CD8-positive, alpha-beta T cell (primary cell): ENCODE measurements at regions of chr11 and their contacts with region 1.

Region 1: GRCh38 chr11:66677599-66678375 is at the start of gene RBM4B:
- DNase-seq: peak; percentile 92 to 99 (median 96)
- ATAC-seq: peak; percentile 84
- H3K4me3 ChIP-seq: peak within 1 kb of the TSS; percentile 79 to 83
- H3K4me3 Mint-ChIP-seq: peak within 1 kb of the TSS; percentile 88
- H3K27ac ChIP-seq: peak within 1 kb of the TSS; percentile 92 to 97
- H3K27ac Mint-ChIP-seq: peak within 1 kb of the TSS; percentile 99
- H3K4me1 ChIP-seq: peaks cover 24% of the 10 kb centered on the region
- H3K4me1 Mint-ChIP-seq: peaks cover 36% of the 10 kb centered on the region
- H3K27me3 ChIP-seq: no peaks in the 10 kb centered on the region
- H3K27me3 Mint-ChIP-seq: no peaks in the 10 kb centered on the region
- CTCF ChIP-seq: no peak
- total RNA-seq, gene RBM4B: 5.4 to 5.6 TPM

Region 2: DNA sequence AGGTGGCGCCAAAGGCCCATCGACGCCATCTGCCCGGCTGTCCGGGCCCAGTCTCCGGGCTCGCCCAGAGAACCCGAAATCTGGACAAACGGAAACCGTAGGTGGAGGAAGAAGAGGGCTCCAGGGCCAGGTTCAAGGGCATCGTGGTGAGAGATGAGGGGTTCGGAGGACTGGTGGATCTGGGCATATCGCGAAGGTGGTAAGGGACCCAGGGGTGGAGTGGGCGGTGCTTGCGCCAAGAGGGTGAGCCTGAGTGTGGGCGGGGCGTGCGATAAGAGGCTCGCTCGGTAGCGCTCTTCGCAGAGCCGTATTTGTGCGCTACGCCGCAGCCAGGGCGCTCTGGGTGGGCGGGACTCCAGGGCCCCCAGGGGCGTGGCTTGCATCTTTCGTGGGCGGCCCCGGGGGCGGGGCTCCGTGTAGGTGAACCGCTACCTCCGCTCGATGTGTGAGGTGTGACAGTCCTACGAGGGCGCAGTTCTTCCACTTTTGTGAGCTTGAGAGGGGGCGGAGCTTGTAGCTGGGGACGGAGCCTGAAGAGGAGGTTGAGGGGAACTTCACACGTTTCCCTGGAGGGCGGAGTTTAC is 365.7 kb before region 1 on chr11:
- CTCF ChIA-PET with region 1: interaction called, 3 read pairs
- POLR2A ChIA-PET with region 1: interaction called, 3 read pairs
- intact Hi-C with region 1: loop called in 1 of 2 experiments (anchors 2 kb)
- DNase-seq: peak; percentile 94 to 100 (median 99)
- ATAC-seq: peak; percentile 71
- H3K4me3 ChIP-seq: peak overlapping the region; percentile 51 to 79
- H3K4me3 Mint-ChIP-seq: peak overlapping the region; percentile 93
- H3K27ac ChIP-seq: peak overlapping the region; percentile 76 to 98
- H3K27ac Mint-ChIP-seq: peak overlapping the region; percentile 99
- H3K4me1 ChIP-seq: peaks cover 6% of the 10 kb centered on the region
- H3K4me1 Mint-ChIP-seq: peaks cover 20% of the 10 kb centered on the region
- H3K27me3 ChIP-seq: no peaks in the 10 kb centered on the region
- H3K27me3 Mint-ChIP-seq: no peaks in the 10 kb centered on the region
- CTCF ChIP-seq: peak; percentile 98

Region 3: GRCh38 chr11:66438504-66439466 is 239.0 kb before region 1 on chr11 and contains the start of gene MRPL11:
- CTCF ChIA-PET with region 1: interaction called, 12 read pairs
- POLR2A ChIA-PET with region 1: interaction called, 9 read pairs
- intact Hi-C with region 1: loop called in 1 of 2 experiments (anchors 1 kb)
- DNase-seq: peak; percentile 79 to 96 (median 90)
- ATAC-seq: peak; percentile 99
- H3K4me3 ChIP-seq: peak within 1 kb of the TSS; percentile 72 to 78
- H3K4me3 Mint-ChIP-seq: peak within 1 kb of the TSS; percentile 91
- H3K27ac ChIP-seq: peak within 1 kb of the TSS; percentile 66 to 85
- H3K27ac Mint-ChIP-seq: peak within 1 kb of the TSS; percentile 98
- H3K4me1 ChIP-seq: peaks cover 7% of the 10 kb centered on the region
- H3K4me1 Mint-ChIP-seq: peaks cover 10% of the 10 kb centered on the region
- H3K27me3 ChIP-seq: no peaks in the 10 kb centered on the region
- H3K27me3 Mint-ChIP-seq: peaks cover 2% of the 10 kb centered on the region
- CTCF ChIP-seq: peak; percentile 64
- total RNA-seq, gene MRPL11: 19.8 to 20.6 TPM

Region 4: DNA sequence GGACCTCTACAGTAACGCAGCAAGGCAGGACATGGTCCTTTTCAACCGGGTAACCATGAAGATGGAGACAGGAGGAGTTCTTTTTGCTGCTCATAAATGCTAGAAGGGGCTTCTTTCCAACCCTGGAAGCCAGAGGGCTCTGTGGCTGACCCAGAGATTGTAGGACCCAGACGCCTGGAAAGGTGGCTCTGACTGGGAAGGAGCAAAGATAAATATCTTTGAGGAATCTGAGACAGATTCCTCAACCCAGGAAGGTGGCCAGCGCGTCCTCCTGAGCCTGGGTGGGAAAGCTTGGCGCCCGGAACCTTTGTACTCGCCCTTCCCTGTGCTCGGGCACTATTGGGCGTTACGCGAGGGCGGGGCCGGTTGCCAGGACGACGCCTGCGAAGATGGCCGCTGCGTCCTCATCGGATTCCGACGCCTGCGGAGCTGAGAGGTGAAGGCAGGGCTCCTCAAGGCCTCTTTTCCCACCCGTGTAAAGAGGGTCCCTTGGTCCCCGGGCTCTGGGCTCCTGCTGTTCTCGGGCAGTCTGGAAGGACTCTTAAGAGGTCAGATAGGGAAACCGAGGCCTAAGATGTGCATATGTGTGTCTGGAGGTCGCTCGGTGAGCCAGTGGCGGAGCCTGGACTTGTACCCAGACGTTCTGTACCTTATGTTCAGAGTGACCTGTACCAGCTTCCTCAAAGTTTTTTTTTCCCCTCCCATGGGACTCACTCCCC is 167.4 kb before region 1 on chr11 and contains the start of gene BBS1:
- CTCF ChIA-PET with region 1: interaction called, 9 read pairs
- POLR2A ChIA-PET with region 1: no interaction called
- intact Hi-C with region 1: loop called in 1 of 2 experiments (anchors 1 kb)
- DNase-seq: peak; percentile 62 to 91 (median 84)
- ATAC-seq: peak; percentile 98
- H3K4me3 ChIP-seq: peak within 1 kb of the TSS; percentile 68 to 81
- H3K4me3 Mint-ChIP-seq: peak within 1 kb of the TSS; percentile 88
- H3K27ac ChIP-seq: peak within 1 kb of the TSS; percentile 57 to 62
- H3K27ac Mint-ChIP-seq: peak within 1 kb of the TSS; percentile 22
- H3K4me1 ChIP-seq: peaks cover 15% of the 10 kb centered on the region
- H3K4me1 Mint-ChIP-seq: peaks cover 13% of the 10 kb centered on the region
- H3K27me3 ChIP-seq: no peaks in the 10 kb centered on the region
- H3K27me3 Mint-ChIP-seq: no peaks in the 10 kb centered on the region
- CTCF ChIP-seq: no peak
- total RNA-seq, gene BBS1: 10.8 to 13.5 TPM

Region 5: DNA sequence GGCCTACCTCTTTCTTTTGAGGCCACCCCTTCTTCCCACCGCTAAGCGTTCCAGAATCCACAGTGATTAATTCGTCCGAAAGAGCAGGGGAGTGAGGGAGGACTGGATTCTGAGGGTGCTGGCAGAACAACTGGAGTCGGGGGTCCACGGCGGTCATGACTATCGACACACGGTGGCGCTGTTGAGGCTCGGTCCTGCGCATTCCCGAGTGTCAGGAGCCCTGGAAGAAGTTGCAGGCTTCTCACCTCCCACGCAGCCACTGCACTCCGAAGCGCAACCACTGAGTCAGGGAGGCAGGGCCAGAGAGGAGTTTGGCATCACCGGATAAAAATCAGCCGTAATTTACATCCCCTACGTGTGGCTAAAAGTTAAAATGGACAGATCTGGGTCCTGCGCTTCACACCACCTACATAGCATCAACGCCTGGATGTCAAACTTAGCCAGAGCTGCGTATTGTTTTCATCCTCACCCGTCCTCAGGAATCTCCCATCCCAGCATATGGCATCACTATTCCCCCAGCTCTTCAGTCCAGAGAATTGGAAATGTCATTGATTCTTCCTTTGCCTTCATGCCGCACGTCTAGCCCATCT is 98.7 kb before region 1 on chr11:
- CTCF ChIA-PET with region 1: interaction called, 280 read pairs
- POLR2A ChIA-PET with region 1: interaction called, 13 read pairs
- intact Hi-C with region 1: loop called (anchors 1 kb)
- DNase-seq: peak; percentile 43 to 86 (median 80)
- ATAC-seq: peak; percentile 90
- H3K4me3 ChIP-seq: no peak overlapping the region
- H3K4me3 Mint-ChIP-seq: no peak overlapping the region
- H3K27ac ChIP-seq: no peak overlapping the region
- H3K27ac Mint-ChIP-seq: no peak overlapping the region
- H3K4me1 ChIP-seq: no peaks in the 10 kb centered on the region
- H3K4me1 Mint-ChIP-seq: peaks cover 6% of the 10 kb centered on the region
- H3K27me3 ChIP-seq: no peaks in the 10 kb centered on the region
- H3K27me3 Mint-ChIP-seq: peaks cover 2% of the 10 kb centered on the region
- CTCF ChIP-seq: peak; percentile 86

Region 6: DNA sequence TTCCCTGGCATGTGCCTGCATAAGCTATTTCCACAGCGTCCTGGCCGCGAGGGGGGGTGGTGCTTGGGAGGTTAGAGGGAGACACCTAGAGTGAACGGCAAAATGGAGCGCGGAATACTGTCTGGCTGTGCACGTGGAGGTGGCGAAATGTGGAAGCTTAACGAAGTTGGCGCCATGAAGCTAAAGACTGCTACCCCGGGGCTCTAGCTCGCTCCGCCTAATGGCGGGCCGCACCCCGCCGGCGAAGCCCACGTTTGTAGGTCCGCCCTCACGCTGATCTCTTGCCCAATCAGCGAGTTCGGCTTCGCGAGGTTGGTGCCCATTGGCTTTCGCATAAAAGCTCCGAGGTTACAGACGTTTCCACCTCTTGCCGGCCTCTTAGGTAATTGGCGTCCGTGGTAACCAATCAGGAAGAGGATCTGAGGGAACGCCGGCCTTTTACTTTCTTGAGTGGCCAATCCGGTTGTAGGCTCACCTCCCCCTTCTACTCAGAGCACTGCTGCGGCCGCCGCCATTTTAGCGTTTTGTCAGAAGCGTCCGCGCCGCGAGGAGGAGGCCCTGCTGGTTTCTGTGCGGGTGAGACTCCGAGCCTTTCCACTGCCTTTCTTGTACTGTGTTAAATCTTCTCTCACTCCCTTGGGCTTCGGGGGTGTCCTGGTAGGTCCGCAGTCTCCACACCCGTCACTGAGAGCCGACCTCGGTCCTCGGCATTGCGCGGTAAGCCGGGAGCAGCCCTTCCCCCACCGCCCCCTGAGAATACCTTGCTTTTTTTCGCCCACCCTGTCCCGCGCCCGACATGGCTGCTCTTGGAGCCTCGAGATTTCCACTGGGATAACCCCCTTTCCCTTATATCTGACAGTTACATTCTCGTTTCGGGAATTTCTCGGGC is 39.4 kb before region 1 on chr11 and contains the start of gene RBM4:
- CTCF ChIA-PET with region 1: interaction called, 22 read pairs
- POLR2A ChIA-PET with region 1: interaction called, 40 read pairs
- intact Hi-C with region 1: loop called (anchors 1 kb)
- DNase-seq: peak; percentile 92 to 100 (median 94)
- ATAC-seq: peak; percentile 89
- H3K4me3 ChIP-seq: peak within 1 kb of the TSS; percentile 87 to 88
- H3K4me3 Mint-ChIP-seq: peak within 1 kb of the TSS; percentile 98
- H3K27ac ChIP-seq: peak within 1 kb of the TSS; percentile 89 to 92
- H3K27ac Mint-ChIP-seq: peak within 1 kb of the TSS; percentile 97
- H3K4me1 ChIP-seq: peaks cover 53% of the 10 kb centered on the region
- H3K4me1 Mint-ChIP-seq: peaks cover 66% of the 10 kb centered on the region
- H3K27me3 ChIP-seq: no peaks in the 10 kb centered on the region
- H3K27me3 Mint-ChIP-seq: no peaks in the 10 kb centered on the region
- CTCF ChIP-seq: no peak
- total RNA-seq, gene RBM4: 183 to 191 TPM

Region 7: DNA sequence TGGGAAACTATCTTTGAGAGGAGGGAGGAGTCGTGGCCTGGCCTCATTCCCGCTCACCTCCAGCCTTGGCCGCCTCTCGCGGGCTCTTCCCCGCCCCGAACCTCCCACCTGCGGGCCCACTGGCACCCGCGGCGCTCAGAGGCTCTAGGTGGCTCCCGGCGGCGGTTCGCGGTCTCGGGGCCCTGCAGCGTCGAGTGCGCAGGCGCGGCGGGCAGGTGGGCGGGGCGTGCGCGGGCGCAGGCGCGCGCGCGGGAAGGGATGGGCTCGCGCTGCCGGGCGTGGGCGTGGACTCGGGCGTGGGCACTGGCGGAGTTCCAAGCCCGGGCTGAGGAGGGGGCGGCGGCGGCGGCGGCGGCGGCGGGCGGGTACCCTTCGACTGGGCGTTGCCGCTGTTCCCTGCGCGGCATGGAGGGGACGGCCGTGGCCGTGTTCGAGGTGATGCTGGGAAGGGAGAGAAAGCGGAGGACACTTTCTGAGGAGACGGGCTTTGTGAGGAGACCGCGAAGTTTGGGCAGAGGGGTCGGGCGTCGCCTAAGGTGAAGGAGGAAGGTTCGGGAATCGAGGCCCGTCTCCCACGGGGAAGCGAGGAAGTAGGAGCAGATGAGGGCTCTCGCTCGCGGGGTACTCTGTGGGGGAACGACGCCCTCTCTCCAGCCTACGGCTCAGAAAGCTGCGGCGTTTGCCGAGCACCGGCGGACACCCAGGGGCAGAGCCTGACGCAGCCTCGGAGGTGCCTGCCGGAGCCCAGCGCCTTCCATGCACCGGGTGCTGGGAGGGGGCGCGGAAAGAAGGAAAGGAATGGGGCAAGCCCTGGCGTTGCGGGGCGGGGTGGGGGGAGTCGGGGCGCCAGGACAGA is 66.9 kb after region 1 on chr11:
- CTCF ChIA-PET with region 1: no interaction called
- POLR2A ChIA-PET with region 1: interaction called, 3 read pairs
- intact Hi-C with region 1: loop called in 1 of 2 experiments (anchors 2 kb)
- DNase-seq: peak; percentile 76 to 93 (median 87)
- ATAC-seq: peak; percentile 87
- H3K4me3 ChIP-seq: peak overlapping the region; percentile 81 to 92
- H3K4me3 Mint-ChIP-seq: peak overlapping the region; percentile 90
- H3K27ac ChIP-seq: peak overlapping the region; percentile 49 to 71
- H3K27ac Mint-ChIP-seq: peak overlapping the region; percentile 75
- H3K4me1 ChIP-seq: peaks cover 5% of the 10 kb centered on the region
- H3K4me1 Mint-ChIP-seq: peaks cover 3% of the 10 kb centered on the region
- H3K27me3 ChIP-seq: no peaks in the 10 kb centered on the region
- H3K27me3 Mint-ChIP-seq: no peaks in the 10 kb centered on the region
- CTCF ChIP-seq: no peak